A673 (cell line): ENCODE measurements at regions of chr1 and their contacts with region 1.

Region 1: DNA sequence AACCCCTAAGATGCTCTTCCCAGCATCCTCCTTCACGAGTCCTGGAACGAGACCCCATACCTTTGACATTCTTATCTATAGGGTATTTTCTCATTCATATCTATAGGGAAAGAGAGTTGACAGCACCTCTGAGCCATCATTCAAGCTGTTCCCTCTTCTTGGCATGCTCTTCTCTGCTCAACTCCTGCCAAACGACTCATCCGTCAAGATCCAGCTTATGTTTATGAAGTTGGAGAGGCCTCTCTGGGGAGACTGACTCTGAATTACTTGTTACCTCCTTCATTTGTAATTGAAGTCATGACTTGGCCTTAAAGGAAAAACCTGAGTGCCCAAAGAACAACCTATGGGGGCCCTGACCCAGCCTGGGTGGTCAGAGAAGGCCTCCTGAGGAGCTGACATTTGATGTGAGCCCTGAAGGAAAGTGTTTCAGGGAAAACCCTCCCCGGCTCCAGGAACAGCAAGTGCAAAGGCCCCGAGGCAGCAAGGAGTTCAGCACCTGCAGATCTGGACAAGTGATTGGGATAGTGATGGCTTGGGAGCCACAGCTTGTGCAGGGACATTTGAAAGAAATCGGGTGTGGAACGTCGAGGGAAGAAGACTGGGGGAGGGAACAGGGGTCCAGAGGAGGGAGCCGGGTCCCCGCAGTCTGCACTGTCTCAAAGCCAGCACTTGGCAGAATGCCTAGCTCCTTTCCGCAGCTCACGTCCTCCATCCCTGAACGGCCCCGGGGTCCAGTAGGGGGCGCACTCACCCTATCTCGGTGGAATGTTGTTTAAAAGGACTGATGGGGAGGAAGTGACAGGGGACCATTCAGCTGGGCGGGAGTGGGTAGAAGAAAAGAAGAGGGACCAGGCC is 14.0 kb upstream of the CDA start:
- DNase-seq: peak; percentile 90
- H3K4me3 ChIP-seq: no peak overlapping the region
- H3K27ac ChIP-seq: no peak overlapping the region
- H3K4me1 ChIP-seq: no peaks in the 10 kb centered on the region
- H3K27me3 ChIP-seq: no peaks in the 10 kb centered on the region
- CTCF ChIP-seq: peak; percentile 91

Region 2: DNA sequence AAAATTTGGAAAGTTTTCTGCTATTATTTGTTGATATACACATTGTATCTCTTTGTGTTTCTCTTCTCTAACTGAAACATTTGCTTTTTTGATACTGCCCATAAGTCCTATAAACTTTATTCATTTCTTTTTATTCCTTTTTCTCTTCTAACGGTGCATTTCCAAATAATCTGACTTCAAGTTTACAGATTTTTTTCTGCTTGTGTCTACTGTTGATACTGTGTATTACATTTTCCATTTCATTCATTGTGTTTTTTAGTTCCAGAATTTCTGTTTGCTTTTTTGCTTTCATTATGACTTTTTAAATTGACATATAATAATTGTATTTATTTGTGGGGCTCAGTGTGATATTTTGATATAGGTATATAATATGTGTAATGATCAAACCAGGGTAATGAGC is 557.2 kb before region 1 on chr1:
- CTCF ChIA-PET with region 1: no interaction called
- POLR2A ChIA-PET with region 1: no interaction called
- intact Hi-C with region 1: no loop called
- DNase-seq: no peak
- H3K4me3 ChIP-seq: no peak overlapping the region
- H3K27ac ChIP-seq: no peak overlapping the region
- H3K4me1 ChIP-seq: no peaks in the 10 kb centered on the region
- H3K27me3 ChIP-seq: peaks cover 9% of the 10 kb centered on the region
- CTCF ChIP-seq: no peak

Region 3: GRCh38 chr1:20466273-20466672 is 108.6 kb before region 1 on chr1:
- CTCF ChIA-PET with region 1: no interaction called
- POLR2A ChIA-PET with region 1: no interaction called
- intact Hi-C with region 1: no loop called
- DNase-seq: no peak
- H3K4me3 ChIP-seq: no peak overlapping the region
- H3K27ac ChIP-seq: no peak overlapping the region
- H3K4me1 ChIP-seq: no peaks in the 10 kb centered on the region
- H3K27me3 ChIP-seq: peaks cover 23% of the 10 kb centered on the region
- CTCF ChIP-seq: no peak

Region 4: GRCh38 chr1:20558191-20558590 is 16.7 kb before region 1 on chr1:
- CTCF ChIA-PET with region 1: interaction called, 10 read pairs
- POLR2A ChIA-PET with region 1: no interaction called
- intact Hi-C with region 1: no loop called
- DNase-seq: no peak
- H3K4me3 ChIP-seq: no peak overlapping the region
- H3K27ac ChIP-seq: no peak overlapping the region
- H3K4me1 ChIP-seq: no peaks in the 10 kb centered on the region
- H3K27me3 ChIP-seq: peaks cover 50% of the 10 kb centered on the region
- CTCF ChIP-seq: no peak

Region 5: DNA sequence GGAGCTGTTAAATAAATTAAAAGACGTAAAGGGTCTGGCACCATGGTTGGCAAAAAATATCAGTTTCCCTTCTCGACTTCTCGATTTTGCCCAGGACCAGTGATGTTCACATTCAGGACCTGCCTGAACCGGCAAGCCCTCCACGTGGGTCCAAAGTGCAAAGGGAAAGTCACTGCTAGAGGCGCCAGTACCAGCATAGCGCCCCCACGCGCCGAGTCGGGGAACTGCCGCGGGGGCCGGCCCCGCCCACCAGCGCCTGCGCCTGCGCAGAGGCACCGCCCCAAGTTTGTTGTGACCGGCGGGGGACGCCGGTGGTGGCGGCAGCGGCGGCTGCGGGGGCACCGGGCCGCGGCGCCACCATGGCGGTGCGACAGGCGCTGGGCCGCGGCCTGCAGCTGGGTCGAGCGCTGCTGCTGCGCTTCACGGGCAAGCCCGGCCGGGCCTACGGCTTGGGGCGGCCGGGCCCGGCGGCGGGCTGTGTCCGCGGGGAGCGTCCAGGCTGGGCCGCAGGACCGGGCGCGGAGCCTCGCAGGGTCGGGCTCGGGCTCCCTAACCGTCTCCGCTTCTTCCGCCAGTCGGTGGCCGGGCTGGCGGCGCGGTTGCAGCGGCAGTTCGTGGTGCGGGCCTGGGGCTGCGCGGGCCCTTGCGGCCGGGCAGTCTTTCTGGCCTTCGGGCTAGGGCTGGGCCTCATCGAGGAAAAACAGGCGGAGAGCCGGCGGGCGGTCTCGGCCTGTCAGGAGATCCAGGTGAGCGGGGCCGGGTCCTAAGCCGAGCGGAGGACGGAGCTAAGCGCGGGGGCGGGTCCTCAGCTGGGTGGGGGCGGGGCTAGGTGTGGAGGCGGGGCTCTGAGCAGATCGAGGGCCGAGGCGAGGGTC is 58.5 kb after region 1 on chr1 and contains the start of gene PINK1:
- CTCF ChIA-PET with region 1: interaction called, 26 read pairs
- POLR2A ChIA-PET with region 1: no interaction called
- intact Hi-C with region 1: loop called (anchors 1 kb)
- DNase-seq: peak; percentile 77
- H3K4me3 ChIP-seq: peak within 1 kb of the TSS; percentile 84
- H3K27ac ChIP-seq: peak within 1 kb of the TSS; percentile 55
- H3K4me1 ChIP-seq: no peaks in the 10 kb centered on the region
- H3K27me3 ChIP-seq: no peaks in the 10 kb centered on the region
- CTCF ChIP-seq: peak; percentile 97
- total RNA-seq, gene PINK1: 7.2 and 13.3 TPM in 2 replicates

Region 6: GRCh38 chr1:20645414-20645813 is 70.5 kb after region 1 on chr1:
- CTCF ChIA-PET with region 1: no interaction called
- POLR2A ChIA-PET with region 1: no interaction called
- intact Hi-C with region 1: no loop called
- DNase-seq: no peak
- H3K4me3 ChIP-seq: no peak overlapping the region
- H3K27ac ChIP-seq: no peak overlapping the region
- H3K4me1 ChIP-seq: no peaks in the 10 kb centered on the region
- H3K27me3 ChIP-seq: no peaks in the 10 kb centered on the region
- CTCF ChIP-seq: no peak